ENCODE measurements at regions of chr10 and their contacts with region 1.

Region 1: DNA sequence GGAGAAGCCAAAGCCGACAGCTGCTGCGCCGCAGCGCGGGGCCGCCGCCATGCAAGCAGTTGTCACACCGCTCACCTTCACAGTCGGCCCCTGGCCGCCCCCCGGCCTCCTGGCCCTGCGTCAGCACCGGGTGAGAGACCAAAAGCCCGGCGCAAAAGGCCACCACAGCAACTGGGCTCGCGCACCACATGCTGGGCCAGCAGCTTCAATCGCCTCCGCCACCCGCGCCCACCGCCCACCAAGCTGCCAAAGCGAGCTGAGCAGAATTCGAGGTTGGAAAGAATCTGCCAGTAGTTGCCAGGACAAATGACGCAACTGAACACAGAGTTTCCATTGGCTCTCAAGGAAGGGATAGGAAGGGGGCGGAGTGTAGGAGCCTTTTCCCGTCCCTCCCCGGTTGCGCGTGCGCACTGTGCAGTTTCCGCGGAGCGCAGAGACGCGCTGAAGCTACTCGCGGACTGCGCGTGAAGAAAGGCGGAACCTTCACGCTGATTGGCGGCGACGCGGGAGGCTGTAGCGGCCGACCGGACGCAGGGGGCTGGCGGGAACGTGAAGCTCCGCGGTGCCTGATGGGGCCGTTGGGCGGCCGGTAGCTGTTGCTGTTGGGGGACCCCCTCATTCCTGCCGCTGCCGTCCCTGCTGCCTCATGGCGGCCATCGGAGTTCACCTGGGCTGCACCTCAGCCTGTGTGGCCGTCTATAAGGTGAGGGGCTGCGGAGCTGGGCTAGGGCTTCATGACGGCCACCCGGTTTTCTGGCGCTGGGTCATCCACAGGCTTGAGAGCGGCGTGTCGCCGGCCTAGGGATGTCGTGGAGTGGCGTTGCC is at the starts of genes CDNF, HSPA14 and MSANTD7:
- DNase-seq: peak; percentile 100
- H3K4me3 Mint-ChIP-seq: peak within 1 kb of the TSS; percentile 92
- H3K27ac Mint-ChIP-seq: peak within 1 kb of the TSS; percentile 96
- H3K4me1 Mint-ChIP-seq: peaks cover 18% of the 10 kb centered on the region
- H3K27me3 Mint-ChIP-seq: no peaks in the 10 kb centered on the region
- total RNA-seq, gene CDNF: 0.62 and 0.70 TPM in 2 replicates
- total RNA-seq, gene HSPA14: 42.0 and 44.1 TPM in 2 replicates
- total RNA-seq, gene MSANTD7: 28.9 and 30.3 TPM in 2 replicates

Region 2: DNA sequence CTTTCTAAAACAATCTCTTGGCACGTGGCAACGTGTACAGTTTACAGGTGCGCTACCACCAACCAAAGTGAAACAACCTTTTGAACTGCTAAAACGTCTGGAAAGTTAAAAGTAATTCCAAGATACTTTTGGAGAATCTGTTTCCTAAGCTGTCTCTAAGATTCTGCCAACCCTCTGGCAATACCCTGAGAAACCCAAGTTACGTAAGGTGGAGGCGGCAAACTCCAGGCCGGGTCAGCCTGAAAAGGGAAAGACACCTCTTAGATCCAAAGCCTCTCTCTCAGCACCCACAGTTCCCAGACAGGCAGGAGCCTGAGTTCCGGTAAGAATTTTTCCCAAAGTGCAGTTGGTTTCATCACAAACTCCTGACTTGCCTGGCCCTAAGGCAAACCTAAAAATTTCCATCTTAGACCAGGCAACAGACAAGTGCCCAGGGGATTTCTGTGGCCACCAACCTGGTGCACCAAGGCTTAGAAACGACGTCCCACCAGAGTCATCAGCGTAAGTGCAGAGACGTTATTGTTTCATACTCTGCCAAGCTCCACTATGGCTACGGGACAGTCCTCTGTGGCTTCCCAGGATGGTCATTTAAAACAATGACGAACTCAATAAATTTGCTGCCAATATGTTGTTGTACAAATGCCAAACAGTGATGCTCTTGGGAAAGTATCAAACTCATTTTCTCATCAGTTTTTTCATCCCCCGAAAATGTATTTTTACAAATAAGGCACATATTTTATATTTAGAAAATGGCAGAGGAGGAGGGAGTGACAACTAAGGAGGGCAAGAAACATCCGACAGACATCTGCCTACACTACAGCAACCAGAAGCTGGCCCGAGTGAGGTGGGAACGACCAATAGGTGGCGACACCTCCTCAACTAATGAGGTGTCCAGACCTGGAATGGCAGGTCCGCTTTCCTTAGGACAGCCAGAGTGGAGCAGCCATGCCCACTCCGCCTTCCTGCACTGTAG is 301.4 kb before region 1 on chr10:
- intact Hi-C with region 1: loop called (anchors 2 kb)
- DNase-seq: peak; percentile 83
- H3K4me3 Mint-ChIP-seq: no peak overlapping the region
- H3K27ac Mint-ChIP-seq: peak overlapping the region; percentile 15
- H3K4me1 Mint-ChIP-seq: peaks cover 66% of the 10 kb centered on the region
- H3K27me3 Mint-ChIP-seq: no peaks in the 10 kb centered on the region

Region 3: GRCh38 chr10:14659626-14660196 is 178.3 kb before region 1 on chr10:
- intact Hi-C with region 1: loop called (anchors 1 kb)
- DNase-seq: peak; percentile 89
- H3K4me3 Mint-ChIP-seq: peak overlapping the region; percentile 64
- H3K27ac Mint-ChIP-seq: peak overlapping the region; percentile 92
- H3K4me1 Mint-ChIP-seq: peaks cover 60% of the 10 kb centered on the region
- H3K27me3 Mint-ChIP-seq: no peaks in the 10 kb centered on the region

Region 4: GRCh38 chr10:14954001-14954770 is 116.2 kb after region 1 on chr10 and contains the start of gene DCLRE1C:
- intact Hi-C with region 1: loop called (anchors 1 kb)
- DNase-seq: peak; percentile 97
- H3K4me3 Mint-ChIP-seq: peak within 1 kb of the TSS; percentile 96
- H3K27ac Mint-ChIP-seq: peak within 1 kb of the TSS; percentile 97
- H3K4me1 Mint-ChIP-seq: peaks cover 45% of the 10 kb centered on the region
- H3K27me3 Mint-ChIP-seq: no peaks in the 10 kb centered on the region
- total RNA-seq, gene DCLRE1C: 17.5 and 21.0 TPM in 2 replicates

Measured in activated CD4-positive, alpha-beta T cell treated with anti-CD3 and anti-CD28 coated beads, Interleukin-2, amount 10 ng/mL, durations not matched to agents 24 days and 14 days (primary cell).